OCI-LY7 (cell line): ENCODE measurements at regions of chr12 and their contacts with region 1.

Region 1: DNA sequence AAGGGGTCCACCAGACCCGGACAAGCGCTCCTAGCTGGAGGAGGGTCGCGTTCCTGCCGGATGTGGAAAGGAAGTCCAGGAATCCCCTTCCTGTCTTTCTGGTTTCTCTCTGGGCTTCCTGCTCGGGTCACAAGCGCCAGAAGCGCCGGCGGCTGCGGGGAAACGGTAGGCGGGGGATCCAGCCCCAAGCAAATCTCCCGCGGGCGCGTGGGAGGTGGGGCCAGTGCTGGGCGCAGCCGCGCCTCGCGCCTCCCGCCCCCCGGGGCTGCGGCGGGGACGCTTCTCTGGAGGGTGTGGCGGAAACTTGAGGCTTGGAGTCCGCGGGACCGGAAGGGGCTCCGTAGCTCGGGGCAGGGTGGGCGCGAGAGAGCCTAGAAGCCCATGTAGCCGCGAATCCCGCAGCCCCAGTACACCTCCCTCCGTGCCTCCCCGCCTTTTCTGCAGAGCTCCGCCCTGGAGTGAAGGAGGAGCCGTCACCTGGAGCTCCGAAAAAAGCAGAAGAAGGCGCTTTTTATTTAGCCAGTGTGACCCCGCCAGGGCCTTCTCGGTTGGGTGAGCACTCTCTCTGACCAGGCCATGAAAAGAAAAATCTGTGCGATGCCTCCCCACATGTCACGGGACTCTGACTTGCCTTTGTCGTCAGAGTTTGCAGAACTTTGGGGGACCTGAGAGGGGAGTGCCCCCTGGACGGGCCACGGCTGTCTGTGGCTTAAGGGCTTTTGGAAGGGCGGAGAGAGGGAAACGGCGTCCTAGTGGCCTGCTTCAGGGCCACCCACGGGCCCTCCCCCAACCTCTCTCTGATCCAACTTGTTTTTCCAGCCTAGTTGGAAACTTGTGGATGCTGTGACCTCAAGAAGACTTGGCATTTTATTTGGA is 21.4 kb upstream of the CLEC2D start:
- DNase-seq: peak; percentile 96
- H3K4me3 ChIP-seq: peak overlapping the region; percentile 91
- H3K27ac ChIP-seq: peak overlapping the region; percentile 98
- H3K4me1 ChIP-seq: peaks cover 44% of the 10 kb centered on the region
- CTCF ChIP-seq: no peak

Region 2: GRCh38 chr12:9615420-9616136 is 32.5 kb before region 1 on chr12:
- CTCF ChIA-PET with region 1: no interaction called
- POLR2A ChIA-PET with region 1: interaction called, 3 read pairs
- intact Hi-C with region 1: loop called (anchors 2 kb)
- DNase-seq: peak; percentile 67
- H3K4me3 ChIP-seq: peak overlapping the region; percentile 58
- H3K27ac ChIP-seq: peak overlapping the region; percentile 96
- H3K4me1 ChIP-seq: peaks cover 61% of the 10 kb centered on the region
- CTCF ChIP-seq: no peak

Region 3: GRCh38 chr12:9662500-9662899 is 14.4 kb after region 1 on chr12:
- CTCF ChIA-PET with region 1: no interaction called
- POLR2A ChIA-PET with region 1: interaction called, 146 read pairs
- intact Hi-C with region 1: no loop called
- DNase-seq: no peak
- H3K4me3 ChIP-seq: no peak overlapping the region
- H3K27ac ChIP-seq: peak overlapping the region; percentile 16
- H3K4me1 ChIP-seq: peaks cover 18% of the 10 kb centered on the region
- CTCF ChIP-seq: no peak

Region 4: GRCh38 chr12:9721394-9722092 is 73.5 kb after region 1 on chr12:
- CTCF ChIA-PET with region 1: interaction called, 4 read pairs
- POLR2A ChIA-PET with region 1: interaction called, 60 read pairs
- intact Hi-C with region 1: no loop called
- DNase-seq: peak; percentile 92
- H3K4me3 ChIP-seq: peak overlapping the region; percentile 42
- H3K27ac ChIP-seq: peak overlapping the region; percentile 99
- H3K4me1 ChIP-seq: peaks cover 100% of the 10 kb centered on the region
- CTCF ChIP-seq: no peak

Region 5: DNA sequence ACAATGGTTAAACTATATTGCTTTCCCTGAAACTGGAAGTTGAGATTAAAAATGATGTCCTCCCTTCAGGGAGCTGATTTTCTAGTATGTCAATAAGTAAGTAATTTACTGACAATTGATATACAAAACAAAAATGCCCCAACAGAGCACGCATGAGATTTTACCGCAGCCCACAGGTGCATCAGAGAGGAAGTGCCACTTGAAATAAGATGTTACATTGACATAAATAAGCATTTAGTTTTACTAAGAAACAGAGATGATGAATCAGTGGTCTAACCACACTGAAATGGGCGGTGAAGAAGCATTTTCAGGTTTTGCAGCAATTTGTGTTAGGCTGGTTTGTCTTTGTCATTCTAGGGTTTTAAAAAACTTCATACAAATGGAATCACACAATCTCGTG is 93.7 kb after region 1 on chr12:
- CTCF ChIA-PET with region 1: no interaction called
- POLR2A ChIA-PET with region 1: interaction called, 14 read pairs
- intact Hi-C with region 1: loop called (anchors 1 kb)
- DNase-seq: peak; percentile 86
- H3K4me3 ChIP-seq: peak overlapping the region; percentile 54
- H3K27ac ChIP-seq: peak overlapping the region; percentile 93
- H3K4me1 ChIP-seq: peaks cover 83% of the 10 kb centered on the region
- CTCF ChIP-seq: no peak